Activated CD4-positive, alpha-beta T cell treated with anti-CD3 and anti-CD28 coated beads, Interleukin-2, amount 10 ng/mL, durations not matched to agents 7 days and 5 days (primary cell): ENCODE measurements at regions of chr2 and their contacts with region 1.

Region 1: DNA sequence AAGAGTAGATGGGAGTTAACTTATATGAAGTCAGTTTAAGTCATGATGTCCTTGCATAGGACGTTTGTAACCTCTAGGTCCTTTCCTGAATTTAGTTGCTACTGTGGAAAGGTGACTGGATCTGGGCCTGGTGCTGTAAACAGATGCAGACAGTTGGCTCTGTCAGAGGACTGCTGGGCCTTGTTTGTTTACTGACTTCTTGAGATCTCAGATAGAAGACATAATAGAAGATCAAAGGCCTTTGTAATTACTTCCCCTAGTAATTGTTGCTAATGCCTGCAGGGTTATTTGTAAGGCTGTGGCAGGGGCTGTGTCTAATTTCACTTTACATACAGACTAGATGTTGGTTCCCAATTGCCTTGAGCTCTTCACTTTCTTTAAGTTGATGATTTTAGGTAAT is 42.4 kb downstream of the LYPD6B start:
- DNase-seq: no peak
- H3K4me3 Mint-ChIP-seq: no peak overlapping the region
- H3K27ac Mint-ChIP-seq: no peak overlapping the region
- H3K4me1 Mint-ChIP-seq: no peaks in the 10 kb centered on the region
- H3K27me3 Mint-ChIP-seq: peaks cover 22% of the 10 kb centered on the region

Region 2: GRCh38 chr2:148948868-148949267 is 132.1 kb before region 1 on chr2:
- CTCF ChIA-PET with region 1: no interaction called
- POLR2A ChIA-PET with region 1: no interaction called
- DNase-seq: no peak
- H3K4me3 Mint-ChIP-seq: no peak overlapping the region
- H3K27ac Mint-ChIP-seq: no peak overlapping the region
- H3K4me1 Mint-ChIP-seq: no peaks in the 10 kb centered on the region
- H3K27me3 Mint-ChIP-seq: no peaks in the 10 kb centered on the region

Region 3: GRCh38 chr2:149068996-149069888 is 11.7 kb before region 1 on chr2:
- CTCF ChIA-PET with region 1: interaction called, 11 read pairs
- POLR2A ChIA-PET with region 1: no interaction called
- DNase-seq: peak; percentile 46
- H3K4me3 Mint-ChIP-seq: no peak overlapping the region
- H3K27ac Mint-ChIP-seq: peak overlapping the region; percentile 28
- H3K4me1 Mint-ChIP-seq: peaks cover 20% of the 10 kb centered on the region
- H3K27me3 Mint-ChIP-seq: peaks cover 9% of the 10 kb centered on the region